Dendritic cell treated with granulocyte-macrophage colony-stimulating factor and Interleukin-4, amounts not matched to agents 40 ng/mL and 50 ng/mL, for 4 days (primary cell): ENCODE measurements at regions of chr15 and their contacts with region 1.

Region 1: GRCh38 chr15:74373731-74374647 is 6.5 kb upstream of the CYP11A1 start:
- H3K4me3 Mint-ChIP-seq: peak overlapping the region; percentile 76
- H3K27ac Mint-ChIP-seq: no peak overlapping the region
- H3K4me1 Mint-ChIP-seq: peaks cover 20% of the 10 kb centered on the region
- H3K27me3 Mint-ChIP-seq: peaks cover 61% of the 10 kb centered on the region

Region 2: GRCh38 chr15:74251131-74251811 is 122.7 kb before region 1 on chr15:
- intact Hi-C with region 1: no loop called
- H3K4me3 Mint-ChIP-seq: no peak overlapping the region
- H3K27ac Mint-ChIP-seq: no peak overlapping the region
- H3K4me1 Mint-ChIP-seq: no peaks in the 10 kb centered on the region
- H3K27me3 Mint-ChIP-seq: peaks cover 17% of the 10 kb centered on the region

Region 3: GRCh38 chr15:74438721-74439316 is 64.8 kb after region 1 on chr15:
- intact Hi-C with region 1: loop called (anchors 2 kb)
- H3K4me3 Mint-ChIP-seq: no peak overlapping the region
- H3K27ac Mint-ChIP-seq: no peak overlapping the region
- H3K4me1 Mint-ChIP-seq: peaks cover 25% of the 10 kb centered on the region
- H3K27me3 Mint-ChIP-seq: peaks cover 11% of the 10 kb centered on the region

Region 4: DNA sequence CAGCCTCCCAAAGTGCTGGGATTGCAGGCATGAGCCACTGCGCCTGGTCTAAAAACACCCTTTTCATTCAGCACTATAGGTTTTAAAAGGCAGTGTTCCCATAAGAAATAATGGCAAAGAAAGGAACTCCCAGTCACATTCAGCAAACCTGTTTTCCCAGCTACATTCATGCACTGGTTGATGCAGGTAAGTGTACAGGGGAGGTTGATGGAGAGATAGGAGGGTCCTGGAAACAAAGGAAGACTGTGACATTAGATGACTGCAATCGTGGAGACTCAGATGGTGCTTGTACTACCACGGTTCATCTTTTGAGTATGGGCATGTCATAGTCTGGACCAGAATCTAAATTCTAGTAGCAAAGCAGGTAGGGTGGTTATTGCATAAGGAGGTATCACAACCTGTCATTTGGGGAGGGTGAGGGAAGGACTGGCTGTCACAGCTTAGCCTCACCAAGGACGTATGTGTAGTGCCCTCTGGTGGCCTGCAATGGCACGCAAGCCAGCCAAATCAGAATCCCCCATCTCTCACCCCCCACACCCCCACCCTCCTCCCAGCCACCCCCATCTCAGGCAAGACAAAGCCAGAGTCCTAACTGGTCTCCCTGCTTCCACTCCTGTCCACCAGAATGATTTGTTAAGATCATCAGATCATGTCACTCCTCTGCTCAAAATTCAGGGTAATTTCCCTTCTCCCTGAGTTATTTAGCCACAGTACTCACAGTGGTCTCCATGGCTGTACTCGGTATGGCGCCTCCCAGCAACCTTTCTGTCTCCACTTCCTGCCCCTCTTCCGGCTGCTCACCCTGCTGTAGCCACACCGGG is 115.7 kb after region 1 on chr15:
- intact Hi-C with region 1: loop called (anchors 2 kb)
- H3K4me3 Mint-ChIP-seq: no peak overlapping the region
- H3K27ac Mint-ChIP-seq: no peak overlapping the region
- H3K4me1 Mint-ChIP-seq: peaks cover 6% of the 10 kb centered on the region
- H3K27me3 Mint-ChIP-seq: no peaks in the 10 kb centered on the region

Region 5: GRCh38 chr15:74635228-74635627 is 261.2 kb after region 1 on chr15:
- intact Hi-C with region 1: loop called (anchors 5 kb)
- H3K4me3 Mint-ChIP-seq: no peak overlapping the region
- H3K27ac Mint-ChIP-seq: no peak overlapping the region
- H3K4me1 Mint-ChIP-seq: peaks cover 6% of the 10 kb centered on the region
- H3K27me3 Mint-ChIP-seq: no peaks in the 10 kb centered on the region

Region 6: DNA sequence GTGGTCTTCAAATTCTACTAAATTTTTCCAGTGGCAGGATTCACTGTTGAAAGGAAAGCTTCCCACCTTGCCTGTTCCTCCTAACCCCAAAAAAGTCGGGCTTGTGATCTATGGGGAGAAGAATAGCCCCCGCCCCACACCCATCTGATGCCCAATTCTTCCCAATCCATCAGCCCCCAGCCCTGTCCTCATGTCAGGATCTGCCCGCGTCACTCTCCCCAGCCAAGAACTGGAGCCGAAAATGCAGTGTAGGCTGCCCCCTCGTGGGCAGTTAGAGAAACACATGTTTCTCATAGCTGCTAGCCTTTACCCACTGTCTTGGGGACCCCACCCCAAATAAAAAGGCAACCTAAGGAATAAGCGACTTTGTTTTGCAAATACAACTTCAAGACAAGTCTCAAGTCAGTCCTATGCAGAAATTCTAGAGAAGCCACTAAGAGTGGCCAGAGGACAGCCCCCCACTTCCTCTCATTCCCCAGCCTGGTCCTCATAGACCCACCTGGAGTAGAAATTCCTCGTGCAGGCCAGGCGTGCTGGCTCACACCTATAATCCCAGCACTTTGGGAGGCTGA is 394.9 kb after region 1 on chr15:
- intact Hi-C with region 1: loop called (anchors 2 kb)
- H3K4me3 Mint-ChIP-seq: no peak overlapping the region
- H3K27ac Mint-ChIP-seq: no peak overlapping the region
- H3K4me1 Mint-ChIP-seq: peaks cover 27% of the 10 kb centered on the region
- H3K27me3 Mint-ChIP-seq: peaks cover 16% of the 10 kb centered on the region